Tibial artery (tissue), 4 donors: ENCODE measurements at regions of chr6 and their contacts with region 1.

Region 1: GRCh38 chr6:99746261-99746895 is 139.7 kb downstream of the PRDM13 start:
- DNase-seq: peak in 1 of 2 donors; percentile 46
- H3K4me3 ChIP-seq: no peak overlapping the region
- H3K27ac ChIP-seq: no peak overlapping the region
- H3K4me1 ChIP-seq: no peaks in the 10 kb centered on the region
- H3K27me3 ChIP-seq: peaks cover 0 to 8% of the 10 kb centered on the region in 2 donors
- CTCF ChIP-seq: peak; percentile 76 to 80

Region 2: GRCh38 chr6:99467509-99468106 is 278.8 kb before region 1 on chr6:
- intact Hi-C with region 1: loop called (anchors 10 kb)
- DNase-seq: no peak
- H3K4me3 ChIP-seq: no peak overlapping the region
- H3K27ac ChIP-seq: no peak overlapping the region
- H3K4me1 ChIP-seq: no peaks in the 10 kb centered on the region
- H3K27me3 ChIP-seq: no peaks in the 10 kb centered on the region
- CTCF ChIP-seq: peak; percentile 45 to 57

Region 3: DNA sequence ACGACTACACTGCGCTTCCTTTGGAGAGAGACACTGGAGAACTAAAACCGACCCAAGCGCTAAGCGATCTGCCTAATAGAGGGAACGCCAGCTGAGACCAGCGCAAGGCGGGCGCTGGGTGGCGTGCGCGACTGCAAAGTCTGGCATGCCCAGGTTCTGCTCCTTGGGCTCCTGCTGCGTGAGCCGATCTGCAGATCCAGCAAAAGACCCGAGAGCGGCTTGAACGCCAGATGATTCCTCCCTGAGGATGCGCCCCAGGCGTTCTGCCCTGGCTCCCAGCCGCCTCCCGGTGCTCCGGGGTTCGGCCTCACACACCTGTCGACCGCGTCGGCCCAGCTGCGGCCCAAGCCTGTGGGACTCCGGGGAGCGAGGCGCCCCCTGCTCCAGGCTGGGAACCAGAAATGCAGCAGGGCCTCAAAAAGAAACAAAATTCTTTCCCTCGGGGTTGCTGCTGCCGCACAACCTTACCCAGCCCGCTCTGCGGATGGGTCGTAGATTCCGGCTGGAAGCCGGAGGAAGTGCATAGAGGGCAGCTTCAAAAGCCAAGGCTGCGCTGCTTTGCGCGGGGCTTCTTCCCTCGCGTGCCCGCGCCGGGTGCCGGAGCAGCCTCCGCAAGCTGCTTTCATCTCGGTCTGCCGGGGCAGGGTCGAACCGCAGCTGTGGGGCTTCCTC is 157.6 kb before region 1 on chr6:
- intact Hi-C with region 1: loop called (anchors 5 kb)
- DNase-seq: peak; percentile 56 to 76
- H3K4me3 ChIP-seq: peak overlapping the region; percentile 48 to 50
- H3K27ac ChIP-seq: no peak overlapping the region
- H3K4me1 ChIP-seq: peaks cover 0 to 29% (median 21%) of the 10 kb centered on the region in 4 donors
- H3K27me3 ChIP-seq: peaks cover 0 to 43% of the 10 kb centered on the region in 2 donors
- CTCF ChIP-seq: peak; percentile 23 to 43

Region 4: DNA sequence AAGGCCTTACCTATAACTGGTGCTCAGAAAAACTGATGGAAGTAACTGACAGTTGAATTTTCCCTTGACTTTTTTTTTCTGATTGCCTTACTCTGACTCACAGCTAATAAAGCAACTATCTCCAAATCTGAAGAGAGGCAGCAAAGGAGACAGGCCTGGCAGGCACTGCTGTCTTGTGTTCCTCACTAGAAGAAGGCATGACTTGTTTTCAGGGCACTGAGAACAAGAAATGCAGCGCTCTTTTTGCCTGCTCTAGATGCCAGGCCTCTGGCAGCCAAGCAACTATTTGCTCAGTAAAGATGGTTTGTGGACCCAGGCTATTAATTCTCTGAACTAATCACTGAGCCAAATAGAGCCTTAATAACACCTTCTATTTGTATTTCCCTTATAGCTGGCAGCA is 15.3 kb after region 1 on chr6:
- intact Hi-C with region 1: no loop called
- DNase-seq: no peak
- H3K4me3 ChIP-seq: no peak overlapping the region
- H3K27ac ChIP-seq: no peak overlapping the region
- H3K4me1 ChIP-seq: no peaks in the 10 kb centered on the region
- H3K27me3 ChIP-seq: no peaks in the 10 kb centered on the region
- CTCF ChIP-seq: no peak